ENCODE measurements at regions of chr2 and their contacts with region 1.

Region 1: DNA sequence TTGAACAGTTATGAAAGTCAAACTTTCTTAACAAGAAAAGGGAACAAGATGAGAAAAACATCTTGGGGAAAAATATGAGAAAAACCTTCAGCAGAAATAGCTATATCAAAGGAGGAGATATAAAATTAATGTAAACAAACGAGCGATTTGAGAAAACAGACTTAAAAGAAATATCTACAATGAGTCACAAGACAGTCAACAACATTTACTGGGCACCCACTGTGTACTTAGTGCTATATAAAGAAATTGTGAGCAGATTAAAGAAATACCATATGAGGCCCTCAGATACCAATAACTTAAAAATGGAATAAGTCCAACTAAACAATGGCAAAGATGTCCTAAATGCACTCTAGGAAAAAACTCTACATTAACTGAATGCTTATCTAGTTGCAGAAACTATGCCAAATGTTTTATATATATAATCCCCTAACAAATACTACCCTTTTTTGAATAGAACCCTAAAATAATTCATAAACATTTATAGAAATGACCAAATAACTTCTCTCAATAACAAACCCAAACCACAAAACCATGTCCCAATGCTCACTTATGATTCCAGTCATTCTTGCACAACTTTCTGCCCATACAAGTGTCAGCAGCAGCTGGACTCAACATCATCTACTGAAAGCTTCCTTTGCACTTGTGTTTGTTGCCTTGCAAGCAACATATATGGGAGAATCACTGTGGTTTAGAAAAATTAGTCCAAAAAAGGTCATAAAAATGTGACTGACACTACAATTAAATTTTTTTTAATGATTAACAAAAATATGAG is 83.5 kb downstream of the COBLL1 start:
- DNase-seq: no peak
- ATAC-seq: no peak
- H3K4me3 Mint-ChIP-seq: no peak overlapping the region
- H3K27ac Mint-ChIP-seq: no peak overlapping the region
- H3K4me1 Mint-ChIP-seq: peaks cover 13% of the 10 kb centered on the region
- H3K27me3 Mint-ChIP-seq: no peaks in the 10 kb centered on the region

Region 2: GRCh38 chr2:164703915-164704706 is 54.0 kb before region 1 on chr2:
- CTCF ChIA-PET with region 1: interaction called, 10 read pairs
- POLR2A ChIA-PET with region 1: no interaction called
- intact Hi-C with region 1: no loop called
- DNase-seq: no peak
- ATAC-seq: no peak
- H3K4me3 Mint-ChIP-seq: no peak overlapping the region
- H3K27ac Mint-ChIP-seq: no peak overlapping the region
- H3K4me1 Mint-ChIP-seq: no peaks in the 10 kb centered on the region
- H3K27me3 Mint-ChIP-seq: no peaks in the 10 kb centered on the region

Region 3: GRCh38 chr2:164910101-164910899 is 152.2 kb after region 1 on chr2:
- CTCF ChIA-PET with region 1: no interaction called
- POLR2A ChIA-PET with region 1: no interaction called
- intact Hi-C with region 1: loop called in 1 of 2 experiments (anchors 1 kb)
- DNase-seq: peak; percentile 56
- ATAC-seq: peak; percentile 98
- H3K4me3 Mint-ChIP-seq: no peak overlapping the region
- H3K27ac Mint-ChIP-seq: no peak overlapping the region
- H3K4me1 Mint-ChIP-seq: peaks cover 9% of the 10 kb centered on the region
- H3K27me3 Mint-ChIP-seq: no peaks in the 10 kb centered on the region

Measured in activated CD4-positive, alpha-beta T cell treated with anti-CD3 and anti-CD28 coated beads for 36 hours (primary cell).